Naive thymus-derived CD4-positive, alpha-beta T cell (primary cell): ENCODE measurements at regions of chr5 and their contacts with region 1.

Region 1: GRCh38 chr5:56095579-56096102 is 100.9 kb upstream of the IL6ST start:
- DNase-seq: no peak
- ATAC-seq: no peak
- H3K4me3 ChIP-seq: no peak overlapping the region
- H3K4me3 Mint-ChIP-seq: peak overlapping the region in 9 of 10 donors; percentile 32 to 77 (median 56)
- H3K27ac ChIP-seq: peak overlapping the region; percentile 54
- H3K27ac Mint-ChIP-seq: peak overlapping the region; percentile 66 to 100 (median 91)
- H3K4me1 ChIP-seq: peaks cover 0 to 94% of the 10 kb centered on the region in 2 donors
- H3K4me1 Mint-ChIP-seq: peaks cover 56 to 97% (median 86%) of the 10 kb centered on the region in 7 donors
- H3K27me3 ChIP-seq: no peaks in the 10 kb centered on the region
- H3K27me3 Mint-ChIP-seq: no peaks in the 10 kb centered on the region

Region 2: GRCh38 chr5:56148453-56148971 is 52.9 kb after region 1 on chr5:
- CTCF ChIA-PET with region 1: no interaction called
- POLR2A ChIA-PET with region 1: interaction called, 80 read pairs
- intact Hi-C with region 1: loop called in 1 of 2 experiments (anchors 2 kb)
- DNase-seq: peak in 8 of 9 donors; percentile 52 to 84 (median 70)
- ATAC-seq: peak; percentile 87
- H3K4me3 ChIP-seq: peak overlapping the region; percentile 18
- H3K4me3 Mint-ChIP-seq: peak overlapping the region; percentile 45 to 74 (median 62)
- H3K27ac ChIP-seq: peak overlapping the region; percentile 61
- H3K27ac Mint-ChIP-seq: peak overlapping the region; percentile 87 to 97 (median 94)
- H3K4me1 ChIP-seq: peaks cover 0 to 76% of the 10 kb centered on the region in 2 donors
- H3K4me1 Mint-ChIP-seq: peaks cover 39 to 76% (median 70%) of the 10 kb centered on the region in 7 donors
- H3K27me3 ChIP-seq: no peaks in the 10 kb centered on the region
- H3K27me3 Mint-ChIP-seq: peaks cover 0 to 2% (median 0%) of the 10 kb centered on the region in 5 donors

Region 3: DNA sequence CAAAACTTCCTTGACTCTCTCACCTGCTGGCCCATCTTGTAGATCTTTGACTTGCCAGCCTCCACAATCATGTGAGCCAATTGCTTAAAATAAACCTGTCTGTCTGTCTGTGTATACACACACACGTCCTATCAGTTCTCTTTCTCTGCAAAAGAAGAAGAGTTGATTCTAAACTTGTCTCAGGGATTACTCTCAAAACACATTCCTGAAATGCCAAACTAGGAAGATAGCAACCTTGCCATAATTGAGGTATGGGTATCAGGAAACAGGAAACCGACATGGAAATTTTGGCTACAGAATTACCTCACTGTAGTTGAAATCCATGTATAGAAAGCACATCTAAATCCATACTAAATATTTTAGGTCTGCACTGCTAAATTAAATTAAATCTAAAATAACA is 1880.9 kb after region 1 on chr5:
- CTCF ChIA-PET with region 1: no interaction called
- POLR2A ChIA-PET with region 1: no interaction called
- intact Hi-C with region 1: no loop called
- DNase-seq: no peak
- ATAC-seq: no peak
- H3K4me3 ChIP-seq: no peak overlapping the region
- H3K4me3 Mint-ChIP-seq: no peak overlapping the region
- H3K27ac ChIP-seq: no peak overlapping the region
- H3K27ac Mint-ChIP-seq: no peak overlapping the region
- H3K4me1 ChIP-seq: no peaks in the 10 kb centered on the region
- H3K4me1 Mint-ChIP-seq: no peaks in the 10 kb centered on the region
- H3K27me3 ChIP-seq: no peaks in the 10 kb centered on the region
- H3K27me3 Mint-ChIP-seq: peaks cover 0 to 5% (median 0%) of the 10 kb centered on the region in 5 donors